Ascending aorta (tissue), 2 donors: ENCODE measurements at regions of chr1 and their contacts with region 1.

Region 1: DNA sequence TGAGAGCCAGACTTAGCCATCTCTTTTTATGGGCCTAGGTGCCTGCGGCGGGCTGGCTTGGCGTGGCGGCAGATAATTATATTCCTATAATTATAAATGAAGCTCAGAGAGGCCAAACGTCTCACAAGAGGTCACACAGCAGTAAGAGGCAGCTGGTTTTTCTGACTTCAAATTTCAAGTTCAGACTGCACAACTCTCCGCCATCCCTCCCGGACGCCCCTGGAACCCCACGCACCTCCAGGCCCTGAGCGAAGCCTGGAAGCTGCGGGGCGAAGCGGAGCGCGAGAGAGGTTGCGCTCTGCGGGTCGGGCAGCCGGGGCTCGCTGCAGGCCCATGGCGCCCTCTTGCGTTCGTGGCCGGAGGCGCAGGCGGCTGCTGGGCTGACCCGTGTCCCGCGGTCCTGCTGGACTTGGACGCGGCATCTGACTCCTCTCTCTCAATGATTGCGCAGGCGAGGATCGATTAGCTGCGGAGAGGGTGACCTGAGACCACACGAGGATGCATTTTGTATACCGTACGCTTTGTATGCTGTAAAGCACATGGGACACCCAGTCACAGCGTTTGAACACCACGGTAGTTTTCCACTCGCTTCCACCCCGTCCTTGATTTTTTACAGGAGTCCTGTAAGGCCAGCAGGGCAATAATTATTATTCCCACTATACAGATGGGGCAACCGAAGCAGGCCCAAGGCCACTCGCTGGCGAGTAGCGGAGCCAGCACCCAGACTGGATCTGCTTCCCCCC is 272.7 kb downstream of the FOXD2 start:
- DNase-seq: peak in 1 of 2 donors; percentile 88
- H3K4me3 ChIP-seq: peak overlapping the region; percentile 40 to 65
- H3K27ac ChIP-seq: no peak overlapping the region
- H3K4me1 ChIP-seq: peaks cover 12 to 13% of the 10 kb centered on the region in 2 donors
- H3K27me3 ChIP-seq: no peaks in the 10 kb centered on the region
- CTCF ChIP-seq: peak; percentile 96 to 100 (median 99)

Region 2: DNA sequence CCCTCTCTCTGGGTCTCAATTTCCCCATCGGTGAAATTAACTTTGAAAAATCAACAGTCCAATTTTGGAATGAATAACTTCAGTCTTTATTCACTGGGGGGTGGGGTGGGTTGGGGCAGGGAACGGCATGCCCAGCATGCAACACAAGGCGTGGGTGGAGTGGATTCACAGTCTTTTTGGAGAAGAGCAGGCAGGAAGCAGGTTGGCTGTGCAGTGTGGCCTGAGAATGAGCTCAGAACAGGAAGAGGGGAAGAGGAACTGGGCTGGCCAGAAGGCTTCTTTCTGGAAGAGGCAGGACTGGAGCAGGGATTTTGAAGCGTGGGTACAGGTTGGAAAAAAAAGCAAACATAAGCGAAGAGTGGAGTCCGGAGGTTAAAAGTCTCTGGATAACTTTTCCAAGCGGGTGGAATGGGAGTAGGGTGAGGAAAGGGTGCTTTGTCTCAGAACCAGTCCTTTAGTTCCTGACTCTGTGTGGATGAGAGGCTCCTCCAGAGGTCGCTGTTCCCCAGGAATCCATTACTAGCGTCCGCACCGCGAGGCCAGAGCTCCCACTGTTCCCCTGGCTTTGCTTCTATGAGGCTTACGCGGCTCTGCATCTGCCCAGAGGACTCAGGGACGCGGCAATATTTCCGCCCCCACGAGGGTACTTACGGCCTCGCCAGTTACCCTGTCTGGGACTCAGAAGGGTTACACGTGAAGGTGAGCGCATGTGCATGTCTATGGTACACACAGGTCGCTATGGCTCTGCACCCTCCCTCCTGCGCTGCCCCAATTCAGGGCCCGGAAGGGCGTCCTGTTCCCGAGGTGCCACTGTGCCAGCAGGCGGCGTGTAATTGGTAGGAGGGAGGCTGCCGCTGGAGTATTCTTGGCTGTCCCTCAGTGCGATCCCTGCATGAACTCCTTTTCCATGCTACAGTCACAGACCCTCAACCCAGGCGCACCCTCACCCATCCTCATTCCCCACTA is 278.1 kb before region 1 on chr1:
- intact Hi-C with region 1: loop called (anchors 1 kb)
- DNase-seq: peak in 1 of 2 donors; percentile 89
- H3K4me3 ChIP-seq: peak overlapping the region in 1 of 2 donors; percentile 39
- H3K27ac ChIP-seq: no peak overlapping the region
- H3K4me1 ChIP-seq: peaks cover 9 to 39% of the 10 kb centered on the region in 2 donors
- H3K27me3 ChIP-seq: no peaks in the 10 kb centered on the region
- CTCF ChIP-seq: peak; percentile 52 to 72 (median 72)

Region 3: DNA sequence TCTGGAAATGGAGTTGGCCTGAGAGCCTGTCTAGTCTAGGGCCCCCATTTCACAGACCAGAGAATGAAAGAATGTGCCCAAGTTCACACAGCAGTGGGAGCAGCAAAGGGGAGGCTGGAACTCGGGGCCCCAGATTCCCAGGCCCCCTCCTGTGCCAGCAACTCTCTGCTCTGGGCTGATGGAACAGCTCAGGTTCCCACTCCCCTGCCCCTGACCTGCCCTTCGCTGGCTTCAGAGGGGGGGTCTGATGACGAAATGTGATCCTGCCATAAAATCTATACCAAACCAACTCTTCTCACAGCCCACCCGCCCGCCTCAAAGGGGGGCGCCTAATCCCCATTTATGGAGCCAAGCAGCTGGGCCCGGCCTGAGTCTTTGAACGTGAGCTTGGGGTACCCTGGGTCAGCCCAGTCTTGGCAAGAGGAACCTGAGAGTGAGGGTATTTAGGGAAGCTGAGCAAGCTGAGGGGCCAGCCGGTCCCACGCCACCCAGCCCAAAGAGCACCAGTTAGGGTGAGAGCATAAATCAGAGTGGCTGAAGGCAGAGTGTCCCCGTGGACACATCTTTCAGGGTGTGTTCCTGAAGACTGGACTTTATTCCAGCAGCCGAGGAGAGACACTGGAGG is 207.6 kb before region 1 on chr1:
- intact Hi-C with region 1: loop called (anchors 2 kb)
- DNase-seq: no peak
- H3K4me3 ChIP-seq: no peak overlapping the region
- H3K27ac ChIP-seq: no peak overlapping the region
- H3K4me1 ChIP-seq: peaks cover 2 to 3% of the 10 kb centered on the region in 2 donors
- H3K27me3 ChIP-seq: no peaks in the 10 kb centered on the region
- CTCF ChIP-seq: no peak

Region 4: DNA sequence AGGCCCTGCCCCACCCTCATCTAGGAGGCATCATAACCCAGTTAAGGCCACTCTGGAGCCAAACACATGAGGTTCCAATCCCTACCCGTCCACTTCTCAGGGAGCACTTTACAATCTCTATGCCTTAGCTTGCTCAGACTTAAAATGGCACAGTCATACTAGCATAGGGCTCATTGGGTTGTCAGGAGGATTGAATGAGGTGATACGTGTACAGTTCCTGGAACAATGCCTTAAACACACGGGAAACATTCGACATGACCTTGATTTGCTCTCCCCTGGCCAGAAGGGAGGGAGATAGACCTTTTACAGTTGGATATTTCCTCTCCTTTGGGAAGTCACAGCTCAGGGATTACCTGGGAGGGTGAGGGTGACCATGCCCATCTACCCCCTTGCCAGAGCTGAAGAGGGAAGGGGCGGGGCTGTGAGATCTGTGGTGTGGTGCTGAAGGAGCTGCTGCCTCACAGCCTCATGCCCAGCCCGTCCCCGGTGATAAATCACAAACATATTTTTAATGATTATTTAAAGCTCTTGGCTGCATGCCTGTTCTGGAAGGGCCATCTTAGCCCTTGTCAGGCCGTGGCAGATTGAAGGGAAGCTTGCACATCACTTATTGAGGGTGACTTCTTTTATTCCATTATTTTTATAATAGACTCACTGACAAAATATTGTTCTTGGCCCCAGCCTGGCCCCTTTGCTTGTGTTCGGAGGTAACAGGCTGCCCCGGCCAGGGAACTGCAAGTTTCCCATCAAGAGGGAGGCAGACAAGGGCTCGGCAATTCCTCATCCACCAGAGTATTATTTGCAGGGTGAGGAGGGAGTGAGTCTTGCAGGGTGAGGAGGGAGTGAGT is 189.2 kb before region 1 on chr1:
- intact Hi-C with region 1: loop called (anchors 5 kb)
- DNase-seq: peak; percentile 67 to 92
- H3K4me3 ChIP-seq: no peak overlapping the region
- H3K27ac ChIP-seq: peak overlapping the region; percentile 83 to 90
- H3K4me1 ChIP-seq: peaks cover 4 to 26% of the 10 kb centered on the region in 2 donors
- H3K27me3 ChIP-seq: no peaks in the 10 kb centered on the region
- CTCF ChIP-seq: no peak

Region 5: GRCh38 chr1:47569681-47570470 is 140.6 kb before region 1 on chr1:
- intact Hi-C with region 1: loop called (anchors 2 kb)
- DNase-seq: peak; percentile 31 to 89
- H3K4me3 ChIP-seq: no peak overlapping the region
- H3K27ac ChIP-seq: peak overlapping the region in 1 of 2 donors; percentile 22
- H3K4me1 ChIP-seq: peaks cover 0 to 9% of the 10 kb centered on the region in 2 donors
- H3K27me3 ChIP-seq: no peaks in the 10 kb centered on the region
- CTCF ChIP-seq: peak; percentile 45 to 69 (median 69)

Region 6: GRCh38 chr1:47837056-47837830 is 126.7 kb after region 1 on chr1:
- intact Hi-C with region 1: no loop called
- DNase-seq: no peak
- H3K4me3 ChIP-seq: no peak overlapping the region
- H3K27ac ChIP-seq: peak overlapping the region; percentile 76 to 77
- H3K4me1 ChIP-seq: peaks cover 3 to 20% of the 10 kb centered on the region in 2 donors
- H3K27me3 ChIP-seq: no peaks in the 10 kb centered on the region
- CTCF ChIP-seq: no peak